Left colon (tissue), 2 donors: ENCODE measurements at regions of chr13 and their contacts with region 1.

Region 1: DNA sequence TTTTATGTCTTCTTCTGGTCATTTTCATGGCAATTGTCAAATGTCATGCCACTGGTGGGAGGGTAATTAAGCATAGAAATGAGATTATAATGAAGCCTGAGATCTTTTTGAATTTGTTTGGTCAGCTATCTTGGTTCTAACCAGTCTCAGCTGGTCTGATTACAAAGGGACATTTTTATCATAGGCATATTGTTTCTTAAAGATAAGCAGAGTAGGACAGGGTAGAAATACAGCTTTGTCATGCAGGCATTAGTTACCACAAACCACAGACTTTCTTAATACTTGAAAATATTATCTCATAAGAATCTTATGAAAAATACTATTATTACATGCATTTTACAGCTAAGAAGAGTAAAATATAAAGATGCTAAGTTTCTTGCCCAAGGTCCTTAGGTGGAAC is 1761.5 kb downstream of the PCDH9 start:
- DNase-seq: no peak
- ATAC-seq: no peak

Region 2: GRCh38 chr13:65488606-65489005 is 20.0 kb after region 1 on chr13:
- intact Hi-C with region 1: loop called in 1 of 2 experiments (anchors 2 kb)
- DNase-seq: no peak
- ATAC-seq: no peak